ENCODE measurements at regions of chr1 and their contacts with region 1.

Region 1: DNA sequence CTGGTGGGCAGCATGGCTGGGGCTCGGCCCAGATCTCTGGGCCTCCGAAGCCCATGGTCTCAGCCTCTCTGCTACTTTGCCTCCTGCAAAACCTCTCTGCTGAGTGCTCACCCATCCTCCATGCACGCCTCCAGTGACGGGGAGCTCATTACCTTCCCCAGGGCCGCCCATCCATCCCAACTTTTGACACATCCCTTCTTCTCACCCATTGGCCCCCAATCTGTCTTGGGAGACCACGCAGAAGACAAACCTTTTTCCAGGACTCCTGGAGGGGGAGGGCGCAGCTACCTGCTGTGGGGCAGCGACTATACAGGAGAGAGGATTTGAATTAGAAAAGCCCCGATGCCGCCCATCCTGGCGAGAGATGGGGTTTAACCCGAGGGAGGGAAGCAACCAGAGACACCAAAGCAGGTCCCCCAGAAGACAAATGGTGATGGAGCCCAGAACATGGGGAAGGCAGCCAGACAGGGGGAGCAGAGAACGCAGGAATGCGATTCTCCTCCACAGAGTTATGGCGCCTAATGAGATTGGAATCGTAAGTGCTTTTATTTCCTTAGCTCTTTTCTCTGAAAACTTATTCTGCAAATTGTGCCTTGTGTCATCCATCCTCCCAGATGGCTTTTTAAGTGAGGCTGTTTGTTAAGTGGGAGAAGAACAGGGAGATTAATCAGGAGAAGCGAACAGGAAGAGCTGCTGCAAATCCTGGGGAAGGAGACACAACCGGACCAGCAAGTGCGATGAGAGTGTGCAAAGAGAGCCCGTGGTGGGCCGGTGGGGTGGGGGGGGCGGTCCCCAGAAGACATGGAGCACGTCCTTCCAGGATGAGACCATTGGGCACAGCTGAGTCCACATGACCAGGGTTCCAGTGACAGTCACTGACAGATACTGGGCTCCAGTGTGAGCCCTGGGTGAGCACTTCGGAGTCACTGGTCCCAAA is 623.5 kb downstream of the MATN1 start:
- DNase-seq: no peak
- ATAC-seq: no peak
- H3K4me3 ChIP-seq: no peak overlapping the region
- H3K27ac ChIP-seq: no peak overlapping the region
- H3K4me1 ChIP-seq: no peaks in the 10 kb centered on the region
- H3K27me3 ChIP-seq: peaks cover 0 to 60% (median 33%) of the 10 kb centered on the region in 7 donors
- CTCF ChIP-seq: no peak

Region 2: GRCh38 chr1:29984538-29985357 is 115.1 kb before region 1 on chr1:
- intact Hi-C with region 1: no loop called
- DNase-seq: no peak
- ATAC-seq: peak in 7 of 8 donors; percentile 28 to 71 (median 42)
- H3K4me3 ChIP-seq: no peak overlapping the region
- H3K27ac ChIP-seq: peak overlapping the region in 3 of 10 donors; percentile 28 to 78 (median 41)
- H3K4me1 ChIP-seq: peaks cover 0 to 26% (median 0%) of the 10 kb centered on the region in 9 donors
- H3K27me3 ChIP-seq: peaks cover 0 to 8% (median 3%) of the 10 kb centered on the region in 7 donors
- CTCF ChIP-seq: no peak

Region 3: DNA sequence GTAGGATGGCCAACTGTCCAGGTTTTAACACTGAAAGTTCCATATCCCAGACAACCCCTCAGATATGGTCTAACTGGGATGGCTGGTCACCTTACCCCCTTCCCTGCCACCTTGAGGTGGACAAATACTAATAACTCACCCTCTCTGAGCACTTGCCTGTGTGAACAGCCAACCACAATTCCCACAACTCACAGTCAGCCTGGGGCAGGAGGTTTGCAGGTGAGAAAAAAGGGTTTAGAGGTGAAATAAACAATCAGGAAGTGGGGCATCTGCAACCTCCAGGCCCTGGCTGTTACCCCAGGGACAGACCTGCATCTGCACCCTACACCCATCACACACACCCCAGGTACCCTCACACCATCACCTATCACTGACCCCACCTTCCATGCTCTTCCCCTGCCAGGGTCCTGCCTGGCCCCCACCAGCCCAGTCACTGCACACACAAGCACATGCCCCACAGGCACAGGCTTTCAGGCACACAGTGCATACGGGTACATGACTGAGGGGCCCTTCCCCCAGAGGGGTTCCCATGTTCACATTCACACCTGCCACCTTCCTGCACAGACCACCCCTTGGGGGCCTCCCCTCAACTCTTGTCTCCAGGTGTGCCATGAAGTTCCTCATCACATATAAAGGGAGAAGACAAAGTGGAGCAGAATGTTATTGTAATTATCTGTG is 56.0 kb before region 1 on chr1:
- intact Hi-C with region 1: loop called in 1 of 10 experiments (anchors 2 kb)
- DNase-seq: no peak
- ATAC-seq: no peak
- H3K4me3 ChIP-seq: no peak overlapping the region
- H3K27ac ChIP-seq: no peak overlapping the region
- H3K4me1 ChIP-seq: no peaks in the 10 kb centered on the region
- H3K27me3 ChIP-seq: peaks cover 0 to 8% (median 0%) of the 10 kb centered on the region in 7 donors
- CTCF ChIP-seq: no peak